ENCODE measurements at regions of chr2 and their contacts with region 1.

Region 1: DNA sequence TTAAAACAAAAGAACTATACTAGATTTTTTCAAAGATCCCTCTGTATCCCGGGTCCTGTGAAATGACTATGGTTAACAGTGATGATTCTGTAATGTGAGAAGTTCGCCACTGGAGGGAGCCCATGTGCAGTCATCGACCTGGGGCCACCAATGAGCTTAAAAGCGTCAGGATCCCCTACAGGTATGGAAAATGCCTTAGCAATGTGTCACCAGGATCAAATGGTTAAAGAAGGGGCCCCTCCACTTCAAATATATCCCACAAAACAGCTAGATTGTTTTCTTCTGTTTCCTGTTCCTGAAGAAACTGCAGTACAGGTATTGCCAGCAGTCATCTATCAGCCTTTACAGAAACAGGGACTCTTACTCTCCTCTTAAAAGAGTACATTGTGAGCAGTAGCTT is 15.3 kb downstream of the CHRNA1 start:
- DNase-seq: peak; percentile 78
- ATAC-seq: peak; percentile 59
- H3K4me3 Mint-ChIP-seq: no peak overlapping the region
- H3K27ac Mint-ChIP-seq: no peak overlapping the region
- H3K4me1 Mint-ChIP-seq: peaks cover 42% of the 10 kb centered on the region
- H3K27me3 Mint-ChIP-seq: no peaks in the 10 kb centered on the region
- CTCF ChIP-seq: peak; percentile 79

Region 2: DNA sequence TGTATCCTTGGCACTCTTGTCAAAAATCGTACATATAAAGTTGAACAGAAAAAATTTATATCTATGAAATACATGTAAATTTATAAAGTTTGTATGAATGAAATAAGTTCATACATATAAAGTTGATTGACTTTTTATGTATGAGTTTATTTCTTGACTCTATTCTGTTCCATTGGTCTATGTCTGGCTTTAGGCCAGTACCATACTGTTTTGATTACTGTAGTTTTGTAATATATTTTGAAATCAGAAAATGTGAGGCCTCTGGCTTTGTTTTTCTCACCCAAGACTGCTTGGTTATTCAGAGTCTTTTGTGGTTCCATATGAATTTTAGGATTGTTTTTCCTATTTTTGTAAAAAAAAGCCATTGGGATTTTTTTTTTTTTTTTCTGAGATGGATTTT is 456.0 kb before region 1 on chr2:
- CTCF ChIA-PET with region 1: no interaction called
- POLR2A ChIA-PET with region 1: no interaction called
- intact Hi-C with region 1: no loop called
- DNase-seq: no peak
- ATAC-seq: no peak
- H3K4me3 Mint-ChIP-seq: no peak overlapping the region
- H3K27ac Mint-ChIP-seq: no peak overlapping the region
- H3K4me1 Mint-ChIP-seq: no peaks in the 10 kb centered on the region
- H3K27me3 Mint-ChIP-seq: peaks cover 16% of the 10 kb centered on the region
- CTCF ChIP-seq: no peak

Region 3: GRCh38 chr2:174644401-174644800 is 104.5 kb before region 1 on chr2:
- CTCF ChIA-PET with region 1: no interaction called
- POLR2A ChIA-PET with region 1: no interaction called
- intact Hi-C with region 1: no loop called
- DNase-seq: no peak
- ATAC-seq: no peak
- H3K4me3 Mint-ChIP-seq: no peak overlapping the region
- H3K27ac Mint-ChIP-seq: no peak overlapping the region
- H3K4me1 Mint-ChIP-seq: peaks cover 14% of the 10 kb centered on the region
- H3K27me3 Mint-ChIP-seq: no peaks in the 10 kb centered on the region
- CTCF ChIP-seq: no peak

Region 4: DNA sequence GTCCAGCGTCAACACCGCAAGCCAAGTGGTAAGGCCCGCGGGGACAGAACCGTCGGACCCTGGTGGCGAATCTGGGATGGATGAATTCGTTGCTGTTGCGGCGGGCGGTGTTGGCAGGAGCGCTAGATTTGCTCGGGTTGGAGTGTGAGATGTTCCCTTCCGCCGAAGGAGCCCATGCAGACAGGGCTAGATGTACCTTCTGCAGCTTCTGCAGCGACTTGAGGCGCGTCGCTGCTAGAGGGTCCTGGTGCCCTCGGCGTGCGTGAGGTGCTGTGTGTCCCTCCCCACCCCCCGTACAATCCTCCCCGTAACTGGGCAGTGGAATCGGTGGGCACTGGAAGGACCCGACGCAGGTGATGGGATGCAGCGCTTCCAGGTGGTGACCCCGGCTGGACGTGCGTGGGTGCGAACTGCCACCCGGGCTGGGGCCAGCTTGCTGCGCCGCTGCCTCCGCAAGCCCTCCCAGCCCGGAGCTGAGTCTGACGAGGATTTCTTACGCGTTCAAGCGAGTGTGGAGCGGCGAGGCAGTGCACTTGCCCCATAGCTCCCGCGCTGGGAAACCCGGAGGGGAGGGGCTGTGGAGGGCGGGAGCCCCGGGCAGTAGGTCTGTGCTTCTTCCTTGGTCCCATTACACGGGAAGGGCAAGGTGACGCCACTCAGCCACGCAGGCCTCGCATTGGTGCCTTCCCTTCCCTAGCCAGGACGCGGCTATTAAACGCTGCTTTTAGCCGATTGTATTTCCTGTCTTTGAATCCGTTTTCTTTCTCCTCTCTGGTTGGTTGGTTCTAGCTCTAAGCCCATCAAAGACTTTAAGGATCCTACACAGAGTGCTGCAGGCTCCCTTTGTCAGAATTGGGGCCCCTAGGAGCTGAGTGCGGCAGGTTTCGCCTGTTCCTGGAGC is 18.9 kb before region 1 on chr2:
- CTCF ChIA-PET with region 1: interaction called, 24 read pairs
- POLR2A ChIA-PET with region 1: no interaction called
- intact Hi-C with region 1: no loop called
- DNase-seq: peak; percentile 71
- ATAC-seq: peak; percentile 90
- H3K4me3 Mint-ChIP-seq: peak overlapping the region; percentile 78
- H3K27ac Mint-ChIP-seq: peak overlapping the region; percentile 62
- H3K4me1 Mint-ChIP-seq: peaks cover 20% of the 10 kb centered on the region
- H3K27me3 Mint-ChIP-seq: peaks cover 10% of the 10 kb centered on the region
- CTCF ChIP-seq: no peak

Region 5: DNA sequence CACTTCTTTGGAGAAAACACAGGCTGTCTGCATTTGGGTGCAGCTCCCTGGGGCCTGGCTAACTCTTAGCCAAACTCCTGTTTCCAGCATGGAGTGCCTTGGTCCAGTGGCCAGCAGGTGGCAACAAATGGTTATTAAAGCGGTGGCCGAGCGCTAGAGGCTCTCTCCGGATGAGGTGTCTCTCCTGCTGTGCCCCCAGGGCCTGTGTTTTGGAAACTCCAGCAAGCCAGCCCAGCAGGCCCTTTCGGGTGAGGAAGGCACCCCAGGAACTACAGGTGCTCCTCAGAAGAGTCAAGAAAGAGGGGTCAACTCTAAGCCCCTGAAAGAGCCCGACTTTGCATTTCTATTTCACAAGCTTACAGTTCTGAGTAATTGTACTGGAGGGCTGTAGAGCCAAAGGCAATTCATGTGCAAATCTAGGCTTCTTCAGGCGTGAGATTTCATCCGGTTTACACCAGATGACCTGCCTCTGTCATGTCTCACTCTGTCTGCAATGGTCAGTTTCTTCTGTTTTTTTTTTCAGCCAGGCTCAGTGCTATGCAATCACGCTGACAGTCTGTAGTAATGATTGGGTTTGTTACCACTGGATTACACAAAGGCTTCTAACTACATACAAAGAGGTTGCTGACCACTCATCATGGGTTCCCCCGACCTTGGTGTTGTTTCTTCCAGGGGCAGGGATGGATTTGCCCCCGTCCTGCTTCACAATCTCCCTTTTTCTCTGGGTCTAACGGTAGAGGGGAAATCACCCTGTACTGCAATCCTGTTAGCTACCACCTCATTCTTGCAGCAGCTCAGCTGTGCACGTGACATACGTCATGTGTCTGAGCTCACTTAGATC is 22.9 kb after region 1 on chr2:
- CTCF ChIA-PET with region 1: interaction called, 105 read pairs
- POLR2A ChIA-PET with region 1: no interaction called
- intact Hi-C with region 1: no loop called
- DNase-seq: peak; percentile 81
- ATAC-seq: peak; percentile 88
- H3K4me3 Mint-ChIP-seq: no peak overlapping the region
- H3K27ac Mint-ChIP-seq: no peak overlapping the region
- H3K4me1 Mint-ChIP-seq: peaks cover 16% of the 10 kb centered on the region
- H3K27me3 Mint-ChIP-seq: no peaks in the 10 kb centered on the region
- CTCF ChIP-seq: peak; percentile 65

Region 6: GRCh38 chr2:174971865-174972781 is 223.2 kb after region 1 on chr2:
- CTCF ChIA-PET with region 1: interaction called, 12 read pairs
- POLR2A ChIA-PET with region 1: no interaction called
- intact Hi-C with region 1: no loop called
- DNase-seq: no peak
- ATAC-seq: no peak
- H3K4me3 Mint-ChIP-seq: no peak overlapping the region
- H3K27ac Mint-ChIP-seq: no peak overlapping the region
- H3K4me1 Mint-ChIP-seq: peaks cover 5% of the 10 kb centered on the region
- H3K27me3 Mint-ChIP-seq: peaks cover 9% of the 10 kb centered on the region
- CTCF ChIP-seq: no peak

Region 7: DNA sequence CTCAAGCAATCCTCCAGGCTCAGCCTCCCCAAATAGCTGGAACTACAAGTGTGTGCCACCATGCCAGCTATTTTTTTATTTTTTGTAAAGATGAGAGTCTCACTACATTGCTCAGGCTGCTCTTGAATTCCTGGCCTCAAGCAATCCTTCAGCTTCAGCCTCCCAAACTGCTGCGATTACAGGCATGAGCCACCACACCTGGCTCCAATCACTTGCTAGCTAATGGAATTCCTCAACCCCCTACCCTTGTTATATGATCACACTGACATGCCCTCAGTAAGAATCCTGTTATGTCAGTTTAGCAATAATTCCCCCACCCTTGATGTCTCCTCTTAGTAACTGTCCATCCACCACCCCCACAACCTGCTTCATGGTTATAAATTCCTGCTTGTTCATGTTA is 243.9 kb after region 1 on chr2:
- CTCF ChIA-PET with region 1: interaction called, 31 read pairs
- POLR2A ChIA-PET with region 1: no interaction called
- intact Hi-C with region 1: loop called (anchors 5 kb)
- DNase-seq: no peak
- ATAC-seq: no peak
- H3K4me3 Mint-ChIP-seq: no peak overlapping the region
- H3K27ac Mint-ChIP-seq: no peak overlapping the region
- H3K4me1 Mint-ChIP-seq: peaks cover 6% of the 10 kb centered on the region
- H3K27me3 Mint-ChIP-seq: peaks cover 16% of the 10 kb centered on the region
- CTCF ChIP-seq: no peak